ENCODE measurements at regions of chr4 and their contacts with region 1.

Region 1: DNA sequence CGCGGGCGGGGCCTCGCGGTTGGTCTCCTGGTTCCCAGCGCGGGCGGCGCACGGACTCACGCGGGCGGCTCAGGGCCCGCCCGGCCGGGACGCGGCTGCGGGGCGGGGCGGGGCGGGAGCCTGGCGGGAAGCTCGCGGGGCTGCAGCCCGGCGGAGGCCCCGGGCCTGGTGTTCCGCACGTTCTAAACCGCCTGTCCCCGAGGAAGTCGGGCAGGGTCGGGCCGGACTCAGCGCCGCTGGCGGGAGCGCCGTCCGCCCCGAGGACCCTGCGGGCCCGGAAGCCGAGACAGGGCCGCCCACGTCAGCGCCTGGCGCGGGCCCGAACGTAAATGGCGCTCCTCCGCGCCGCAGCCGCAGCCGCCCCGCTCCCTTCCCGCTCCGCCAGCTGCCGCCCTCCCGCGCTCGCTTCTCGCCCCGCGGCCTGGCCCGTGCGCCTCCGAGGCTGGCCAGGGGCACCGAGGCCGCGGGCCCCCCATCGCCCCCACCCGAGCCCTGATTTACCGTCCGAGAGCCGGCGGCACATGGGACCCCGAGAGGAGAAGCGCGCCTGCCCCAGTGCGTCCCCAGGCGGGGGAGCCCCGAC is 309 bp upstream of the CTBP1 start:
- DNase-seq: peak in 1 of 2 experiments; percentile 78
- H3K4me3 ChIP-seq: peak overlapping the region; percentile 42 to 73 (median 44)
- H3K27ac ChIP-seq: peak overlapping the region; percentile 77; the same call in 1 of the 2 replicates
- H3K4me1 ChIP-seq: peaks cover 0 to 16% (median 11%) of the 10 kb centered on the region in 4 experiments; a peak in 5 of 7 replicates
- H3K27me3 ChIP-seq: peaks cover 0 to 2% (median 0%) of the 10 kb centered on the region in 4 experiments; a peak in 1 of 7 replicates
- CTCF ChIP-seq: no peak
- EP300 ChIP-seq: no peak
- POLR2A ChIP-seq: peak in 1 of 2 experiments; percentile 67; a peak in 2 of 3 replicates
- RAD21 ChIP-seq: no peak

Region 2: DNA sequence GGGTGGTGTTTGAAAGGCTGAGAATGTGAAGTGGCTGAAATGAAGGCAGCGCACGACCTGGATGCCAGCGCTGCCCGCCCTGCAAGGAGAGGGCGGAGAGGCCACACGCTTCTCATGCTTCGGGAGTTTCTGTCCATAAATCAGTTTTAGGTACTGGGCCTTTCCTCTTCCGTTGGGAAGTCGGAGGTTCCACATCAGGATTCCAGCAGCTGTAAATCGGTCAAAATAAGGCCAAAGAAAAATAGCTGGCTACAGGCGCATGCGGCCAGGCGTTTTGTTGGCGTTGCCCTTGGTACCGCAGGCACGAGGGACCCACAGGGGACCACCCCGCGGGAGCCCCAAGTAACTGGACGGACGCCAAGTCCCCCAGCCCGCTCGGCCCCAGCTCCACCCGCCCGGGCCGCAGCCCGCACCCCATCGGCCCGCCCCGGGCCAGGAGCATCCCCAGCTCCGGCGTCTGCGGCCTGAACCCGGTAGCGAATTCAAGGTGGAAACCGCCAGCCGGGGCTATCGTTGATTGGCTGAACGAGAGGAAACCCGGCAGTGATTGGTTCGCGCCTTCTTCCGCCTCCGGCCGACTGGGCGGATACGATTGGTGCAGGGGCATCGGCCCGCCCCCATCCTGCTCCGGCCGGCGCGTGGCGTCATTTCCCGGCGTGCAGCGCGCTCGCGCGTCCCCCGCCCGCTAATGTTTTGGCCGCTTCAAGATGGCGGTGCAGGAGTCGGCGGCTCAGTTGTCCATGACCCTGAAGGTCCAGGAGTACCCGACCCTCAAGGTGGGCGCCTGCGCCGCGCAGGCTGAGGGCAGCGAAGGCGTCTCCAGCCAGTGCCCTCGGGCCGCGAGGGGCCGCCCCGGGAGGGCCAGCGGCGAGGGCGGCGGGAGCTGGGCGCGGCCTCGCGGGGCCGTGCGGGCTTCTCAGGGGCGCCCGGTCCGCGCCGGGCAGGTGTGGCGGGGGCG is 40.2 kb after region 1 on chr4 and contains the start of gene MAEA:
- CTCF ChIA-PET with region 1: interaction called, 3 read pairs
- POLR2A ChIA-PET with region 1: interaction called, 12 read pairs
- DNase-seq: peak; percentile 85 to 95
- H3K4me3 ChIP-seq: peak within 1 kb of the TSS; percentile 91 to 97 (median 92)
- H3K27ac ChIP-seq: peak within 1 kb of the TSS; percentile 93
- H3K4me1 ChIP-seq: peaks cover 2 to 16% (median 7%) of the 10 kb centered on the region in 4 experiments
- H3K27me3 ChIP-seq: 0 out of 7 replicates have a peak, but pooled peaks cover 0 to 1% (median 0%) of the 10 kb centered on the region in 4 experiments
- CTCF ChIP-seq: no peak
- EP300 ChIP-seq: no peak
- POLR2A ChIP-seq: peak in 1 of 2 experiments; percentile 91; a peak in 2 of 3 replicates
- RAD21 ChIP-seq: no peak
- total RNA-seq, gene MAEA: 75.3 and 75.8 TPM in 2 replicates

Region 3: DNA sequence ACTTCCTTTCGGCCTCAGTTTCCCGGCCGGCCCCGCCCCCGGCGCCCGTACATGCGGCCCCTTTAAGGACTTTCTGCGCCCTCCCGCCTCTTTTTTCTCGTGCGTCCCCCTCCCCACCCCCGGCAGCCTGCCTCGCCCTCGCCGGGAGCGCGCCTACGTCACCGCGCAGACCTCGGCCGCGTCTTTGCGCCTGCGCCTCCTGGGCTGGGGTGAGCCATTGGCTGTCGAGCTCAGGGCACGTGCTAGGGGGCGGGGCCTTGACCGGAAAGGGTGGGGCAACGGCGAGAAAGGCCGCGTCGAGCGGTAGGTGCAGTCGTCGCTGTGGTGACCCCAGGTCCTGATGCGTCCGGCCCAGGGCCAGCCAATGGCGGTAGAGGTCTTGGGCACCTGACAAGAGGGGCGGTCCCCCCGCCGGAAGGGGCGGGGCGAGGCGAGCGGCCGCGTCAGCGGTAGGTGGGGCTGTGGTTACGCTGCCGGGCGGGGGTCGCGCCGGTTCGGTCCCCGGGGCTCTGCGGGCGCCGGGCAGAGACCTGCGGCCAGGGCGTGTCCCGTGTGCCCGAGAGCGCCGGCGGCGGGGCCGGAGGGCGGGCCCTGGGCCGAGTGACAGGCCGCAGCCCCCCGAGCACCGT is 97.7 kb after region 1 on chr4 and contains the start of gene UVSSA:
- CTCF ChIA-PET with region 1: interaction called, 4 read pairs
- POLR2A ChIA-PET with region 1: interaction called, 49 read pairs
- DNase-seq: peak; percentile 99 to 100
- H3K4me3 ChIP-seq: peak within 1 kb of the TSS; percentile 80 to 91 (median 84)
- H3K27ac ChIP-seq: peak within 1 kb of the TSS; percentile 60; the same call in 1 of the 2 replicates
- H3K4me1 ChIP-seq: peaks cover 0 to 6% (median 2%) of the 10 kb centered on the region in 4 experiments; a peak in 3 of 7 replicates
- H3K27me3 ChIP-seq: no peaks in the 10 kb centered on the region
- CTCF ChIP-seq: no peak
- EP300 ChIP-seq: no peak
- POLR2A ChIP-seq: peak in 1 of 2 experiments; percentile 79; a peak in 2 of 3 replicates
- RAD21 ChIP-seq: no peak
- total RNA-seq, gene UVSSA: 19.0 and 19.4 TPM in 2 replicates

Region 4: GRCh38 chr4:1377226-1377605 is 128.0 kb after region 1 on chr4:
- CTCF ChIA-PET with region 1: no interaction called
- POLR2A ChIA-PET with region 1: no interaction called
- DNase-seq: no peak
- H3K4me3 ChIP-seq: no peak overlapping the region
- H3K27ac ChIP-seq: no peak overlapping the region
- H3K4me1 ChIP-seq: no peaks in the 10 kb centered on the region; a peak in 1 of 7 replicates
- H3K27me3 ChIP-seq: no peaks in the 10 kb centered on the region
- CTCF ChIP-seq: peak in 1 of 3 experiments; percentile 31; a peak in 2 of 4 replicates
- EP300 ChIP-seq: no peak
- POLR2A ChIP-seq: no peak
- RAD21 ChIP-seq: peak; percentile 43